ENCODE measurements at regions of chr4 and their contacts with region 1.

Region 1: GRCh38 chr4:151015459-151016347 is 619 bp upstream of the LRBA start:
- DNase-seq: no peak
- H3K4me3 ChIP-seq: peak overlapping the region; percentile 96
- H3K27ac ChIP-seq: peak overlapping the region; percentile 61
- H3K27me3 ChIP-seq: no peaks in the 10 kb centered on the region
- CTCF ChIP-seq: no peak

Region 2: GRCh38 chr4:150976478-150977118 is 39.1 kb before region 1 on chr4:
- CTCF ChIA-PET with region 1: interaction called, 10 read pairs
- POLR2A ChIA-PET with region 1: no interaction called
- DNase-seq: no peak
- H3K4me3 ChIP-seq: no peak overlapping the region
- H3K27ac ChIP-seq: no peak overlapping the region
- H3K27me3 ChIP-seq: no peaks in the 10 kb centered on the region
- CTCF ChIP-seq: no peak